Right cardiac atrium (tissue), 5 donors: ENCODE measurements at regions of chr7 and their contacts with region 1.

Region 1: GRCh38 chr7:148972375-148972774 is 55.9 kb downstream of the PDIA4 start:
- DNase-seq: no peak
- ATAC-seq: peak; percentile 21 to 41
- H3K4me3 ChIP-seq: no peak overlapping the region
- H3K27ac ChIP-seq: no peak overlapping the region
- H3K4me1 ChIP-seq: no peaks in the 10 kb centered on the region
- H3K27me3 ChIP-seq: no peaks in the 10 kb centered on the region

Region 2: GRCh38 chr7:148503875-148504487 is 468.4 kb before region 1 on chr7:
- intact Hi-C with region 1: loop called in 1 of 4 experiments (anchors 10 kb)
- DNase-seq: no peak
- ATAC-seq: no peak
- H3K4me3 ChIP-seq: no peak overlapping the region
- H3K27ac ChIP-seq: no peak overlapping the region
- H3K4me1 ChIP-seq: no peaks in the 10 kb centered on the region
- H3K27me3 ChIP-seq: no peaks in the 10 kb centered on the region